ENCODE measurements at regions of chr2 and their contacts with region 1.

Region 1: DNA sequence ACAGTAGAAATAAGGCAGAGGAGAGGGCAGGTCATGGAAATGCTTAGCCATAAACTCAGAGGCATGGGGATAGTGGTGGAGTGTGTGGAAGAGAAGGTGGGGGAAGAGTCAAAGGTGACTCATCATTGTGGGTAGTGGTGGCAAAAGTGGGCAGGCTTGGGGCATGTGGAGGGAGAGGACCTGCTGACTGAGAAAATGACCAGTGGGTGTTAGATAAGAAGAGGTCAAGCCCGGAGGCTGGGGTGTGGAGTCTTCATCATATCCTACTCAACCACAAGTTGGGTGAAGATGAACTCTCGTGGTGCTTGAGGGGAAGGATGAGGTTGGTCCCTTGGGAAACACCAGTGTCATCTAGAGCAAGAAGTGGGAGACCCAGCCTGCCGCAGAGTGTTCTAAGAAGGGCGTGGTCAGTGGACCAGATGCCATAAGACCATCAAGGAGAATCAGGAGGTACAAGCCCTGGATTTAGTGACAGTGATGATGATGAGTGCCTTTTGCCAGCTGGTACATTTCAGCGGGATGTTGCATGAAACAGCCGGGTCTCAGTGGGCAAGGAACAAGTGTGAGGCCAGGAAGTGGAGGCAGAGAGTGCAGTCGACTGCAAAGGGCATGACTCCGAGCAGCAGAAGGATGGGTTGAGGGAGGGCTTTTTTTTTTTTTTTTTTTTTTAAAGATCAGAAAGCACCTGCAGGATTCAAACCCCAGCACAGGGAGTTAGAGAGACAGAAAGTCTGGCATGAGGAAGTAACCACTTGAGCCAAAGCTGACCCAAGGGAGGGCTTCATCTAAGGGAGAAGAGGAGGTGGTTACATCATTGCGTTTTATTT is 122.6 kb upstream of the SPRED2 start:
- DNase-seq: no peak
- ATAC-seq: no peak
- H3K4me3 ChIP-seq: no peak overlapping the region
- H3K27ac ChIP-seq: no peak overlapping the region
- H3K4me1 ChIP-seq: peaks cover 0 to 9% (median 4%) of the 10 kb centered on the region in 9 donors
- H3K27me3 ChIP-seq: no peaks in the 10 kb centered on the region
- CTCF ChIP-seq: no peak

Region 2: DNA sequence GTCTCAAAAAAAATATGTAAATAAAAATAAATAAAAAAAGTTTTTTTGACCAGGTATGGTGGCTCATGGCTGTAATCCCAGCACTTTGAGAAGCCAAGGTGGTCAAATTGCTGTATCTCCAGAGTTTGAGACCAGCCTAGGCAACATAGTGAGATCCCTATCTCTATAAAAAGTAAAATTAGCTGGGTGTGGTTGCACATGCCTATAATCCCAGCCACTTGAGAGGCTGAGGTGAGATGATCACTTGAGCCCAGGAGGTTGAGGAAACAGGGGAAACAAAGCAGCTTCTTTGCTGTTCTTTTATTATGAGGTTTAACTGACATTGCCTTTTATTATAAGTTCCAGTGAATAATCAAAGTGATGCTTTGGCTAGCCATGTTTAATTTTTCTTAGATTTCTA is 302.3 kb before region 1 on chr2:
- intact Hi-C with region 1: no loop called
- DNase-seq: no peak
- ATAC-seq: no peak
- H3K4me3 ChIP-seq: no peak overlapping the region
- H3K27ac ChIP-seq: no peak overlapping the region
- H3K4me1 ChIP-seq: no peaks in the 10 kb centered on the region
- H3K27me3 ChIP-seq: no peaks in the 10 kb centered on the region
- CTCF ChIP-seq: no peak

Region 3: GRCh38 chr2:65264821-65265670 is 289.9 kb before region 1 on chr2:
- intact Hi-C with region 1: loop called (anchors 1 to 5 kb)
- DNase-seq: peak in 1 of 2 donors; percentile 66
- ATAC-seq: peak in 7 of 8 donors; percentile 72 to 87 (median 82)
- H3K4me3 ChIP-seq: no peak overlapping the region
- H3K27ac ChIP-seq: no peak overlapping the region
- H3K4me1 ChIP-seq: peaks cover 0 to 16% (median 7%) of the 10 kb centered on the region in 9 donors
- H3K27me3 ChIP-seq: no peaks in the 10 kb centered on the region
- CTCF ChIP-seq: peak; percentile 56 to 84 (median 74)

Region 4: GRCh38 chr2:65576861-65577601 is 22.1 kb after region 1 on chr2:
- intact Hi-C with region 1: no loop called
- DNase-seq: no peak
- ATAC-seq: no peak
- H3K4me3 ChIP-seq: no peak overlapping the region
- H3K27ac ChIP-seq: peak overlapping the region in 1 of 10 donors; percentile 16
- H3K4me1 ChIP-seq: peaks cover 0 to 30% (median 12%) of the 10 kb centered on the region in 9 donors
- H3K27me3 ChIP-seq: peaks cover 0 to 4% (median 0%) of the 10 kb centered on the region in 7 donors
- CTCF ChIP-seq: no peak

Region 5: GRCh38 chr2:65678779-65679391 is 123.9 kb after region 1 on chr2:
- intact Hi-C with region 1: no loop called
- DNase-seq: no peak
- ATAC-seq: no peak
- H3K4me3 ChIP-seq: no peak overlapping the region
- H3K27ac ChIP-seq: no peak overlapping the region
- H3K4me1 ChIP-seq: no peaks in the 10 kb centered on the region
- H3K27me3 ChIP-seq: peaks cover 0 to 16% (median 0%) of the 10 kb centered on the region in 7 donors
- CTCF ChIP-seq: no peak